ENCODE measurements at regions of chr5 and their contacts with region 1.

Region 1: GRCh38 chr5:154654486-154655371 is 100.4 kb upstream of the LARP1 start:
- DNase-seq: peak in 1 of 2 donors; percentile 44
- H3K4me3 ChIP-seq: peak overlapping the region in 1 of 4 donors; percentile 6
- H3K27ac ChIP-seq: peak overlapping the region; percentile 15 to 63 (median 44)
- H3K4me1 ChIP-seq: peaks cover 12 to 27% (median 22%) of the 10 kb centered on the region in 4 donors
- H3K27me3 ChIP-seq: no peaks in the 10 kb centered on the region
- CTCF ChIP-seq: no peak
- EP300 ChIP-seq: no peak
- POLR2A ChIP-seq: no peak

Region 2: DNA sequence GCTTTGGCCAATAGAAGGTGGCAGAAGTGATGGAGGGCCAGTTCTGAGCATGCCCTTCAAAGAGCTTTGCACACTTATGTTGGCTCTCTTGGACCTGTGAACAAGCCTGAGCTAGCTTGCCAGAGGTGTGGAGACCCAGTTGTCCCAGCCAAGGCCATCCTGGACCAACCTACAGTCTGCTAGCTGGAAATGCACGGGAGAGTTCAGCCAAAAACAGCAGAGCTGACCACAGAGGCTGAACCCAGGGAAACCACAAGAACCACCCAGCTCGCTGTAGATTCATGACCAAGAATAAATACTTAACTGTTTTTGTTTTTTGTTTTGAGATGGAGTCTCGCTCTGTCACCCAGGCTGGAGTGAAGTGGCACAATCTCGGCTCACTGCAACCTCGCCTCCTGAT is 111.3 kb before region 1 on chr5:
- intact Hi-C with region 1: no loop called
- DNase-seq: no peak
- H3K4me3 ChIP-seq: no peak overlapping the region
- H3K27ac ChIP-seq: no peak overlapping the region
- H3K4me1 ChIP-seq: peaks cover 0 to 12% (median 0%) of the 10 kb centered on the region in 4 donors
- H3K27me3 ChIP-seq: peaks cover 0 to 59% (median 9%) of the 10 kb centered on the region in 3 donors
- CTCF ChIP-seq: no peak
- EP300 ChIP-seq: no peak
- POLR2A ChIP-seq: no peak

Region 3: GRCh38 chr5:154811653-154812365 is 157.1 kb after region 1 on chr5:
- intact Hi-C with region 1: loop called (anchors 5 kb)
- DNase-seq: peak; percentile 65 to 86
- H3K4me3 ChIP-seq: no peak overlapping the region
- H3K27ac ChIP-seq: peak overlapping the region in 2 of 5 donors; percentile 9 to 17
- H3K4me1 ChIP-seq: peaks cover 0 to 11% (median 0%) of the 10 kb centered on the region in 4 donors
- H3K27me3 ChIP-seq: no peaks in the 10 kb centered on the region
- CTCF ChIP-seq: peak in 5 of 7 experiments; percentile 84 to 91 (median 87)
- EP300 ChIP-seq: no peak
- POLR2A ChIP-seq: no peak

Region 4: DNA sequence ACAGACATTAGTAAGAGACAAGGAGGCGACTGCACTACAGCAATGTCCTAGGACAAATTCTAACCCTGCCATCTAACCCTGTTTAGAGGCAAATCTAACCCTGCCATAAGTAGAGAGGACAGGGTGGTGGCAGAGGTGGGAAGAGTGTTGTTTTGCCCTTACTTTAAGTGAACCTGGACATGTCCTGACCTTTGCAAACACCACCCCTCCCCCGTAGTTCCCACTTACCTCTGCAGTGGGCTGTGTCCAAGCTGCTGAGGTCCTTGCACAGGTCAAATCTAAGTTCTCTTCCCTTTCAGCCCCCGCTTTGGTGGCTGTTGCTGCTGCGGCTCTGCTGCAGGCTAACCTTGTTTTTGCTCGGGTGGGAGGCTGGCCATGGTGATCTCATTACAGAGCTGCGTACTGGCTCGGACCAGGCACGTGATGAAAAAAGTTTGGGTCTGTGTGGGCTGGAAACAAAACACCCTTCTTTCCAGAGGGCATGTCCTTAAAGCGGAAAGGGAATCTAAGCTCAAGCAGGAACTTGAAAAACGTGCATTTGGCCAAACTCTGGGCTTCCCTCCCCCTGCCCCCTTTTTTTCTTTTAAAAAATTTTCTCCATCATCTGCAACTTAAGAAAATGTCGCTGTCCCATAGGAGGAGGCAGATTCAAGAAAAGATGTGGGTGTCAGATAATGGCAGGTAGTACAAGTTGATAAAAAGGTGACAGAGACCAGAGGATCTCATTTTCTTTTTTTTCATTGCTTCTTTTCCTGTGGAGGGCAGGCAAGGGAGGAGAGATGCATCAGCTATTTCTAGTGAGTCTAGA is 195.7 kb after region 1 on chr5 and contains the start of gene FAXDC2:
- intact Hi-C with region 1: no loop called
- DNase-seq: peak; percentile 61 to 94
- H3K4me3 ChIP-seq: peak within 1 kb of the TSS; percentile 45 to 54 (median 50)
- H3K27ac ChIP-seq: peak within 1 kb of the TSS; percentile 39 to 86 (median 76)
- H3K4me1 ChIP-seq: peaks cover 0 to 58% (median 36%) of the 10 kb centered on the region in 4 donors
- H3K27me3 ChIP-seq: no peaks in the 10 kb centered on the region
- CTCF ChIP-seq: no peak
- EP300 ChIP-seq: no peak
- POLR2A ChIP-seq: no peak
- total RNA-seq, gene FAXDC2: 16.5 to 160 (median 24.5) TPM

Region 5: GRCh38 chr5:155564541-155564940 is 909.8 kb after region 1 on chr5:
- intact Hi-C with region 1: no loop called
- DNase-seq: no peak
- H3K4me3 ChIP-seq: no peak overlapping the region
- H3K27ac ChIP-seq: no peak overlapping the region
- H3K4me1 ChIP-seq: no peaks in the 10 kb centered on the region
- H3K27me3 ChIP-seq: no peaks in the 10 kb centered on the region
- CTCF ChIP-seq: no peak
- EP300 ChIP-seq: no peak
- POLR2A ChIP-seq: no peak

Measured in stomach (tissue), 19 donors.